ENCODE measurements at regions of chr2 and their contacts with region 1.

Region 1: DNA sequence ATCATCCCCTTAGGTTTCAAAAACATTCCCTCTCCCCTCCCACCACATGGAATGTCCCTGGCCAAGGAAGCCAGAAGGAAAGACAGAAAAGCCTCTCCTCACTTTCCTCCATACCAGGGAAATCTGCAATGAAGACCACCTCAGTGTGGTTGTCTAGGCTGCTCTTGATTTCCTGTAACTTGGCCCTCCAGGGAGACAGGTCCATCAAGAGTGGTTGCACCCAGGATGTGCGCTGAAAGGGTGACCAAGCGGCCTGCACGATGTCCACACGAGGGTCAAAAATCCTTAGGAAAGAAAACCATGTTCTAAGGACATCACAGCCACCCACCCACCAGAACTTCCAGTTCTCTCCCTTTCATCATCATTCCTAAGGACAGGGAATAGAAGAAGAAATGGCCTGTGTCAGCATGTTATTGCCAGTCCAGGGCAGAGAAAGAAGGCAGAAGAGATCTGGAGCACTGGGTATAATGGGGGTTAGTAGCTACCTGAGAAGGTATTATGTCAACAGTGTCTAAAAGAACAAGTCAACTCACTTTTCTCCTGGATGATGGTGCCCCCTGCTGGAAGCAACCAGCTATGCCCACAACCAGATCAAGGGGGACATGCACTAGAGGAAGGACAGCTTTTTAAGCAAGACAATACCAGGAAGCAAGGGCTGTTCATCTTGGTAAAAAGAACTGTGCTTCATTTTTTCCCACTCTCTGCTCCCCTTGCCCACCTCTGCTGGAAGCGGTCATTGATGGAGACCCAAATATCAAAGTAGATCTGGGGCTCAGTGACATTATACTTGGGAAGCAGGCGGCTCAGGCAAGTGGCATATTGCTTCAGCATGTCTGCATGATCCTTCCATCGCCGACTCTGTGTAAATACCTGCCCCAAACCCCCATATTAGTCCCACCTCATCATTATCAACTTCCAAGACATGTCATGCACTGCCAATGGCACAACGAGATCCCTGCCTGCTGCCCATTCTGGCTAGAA is 9.3 kb downstream of the GGCX start:
- DNase-seq: peak; percentile 86 to 93 (median 88)
- H3K4me3 ChIP-seq: no peak overlapping the region
- H3K27ac ChIP-seq: no peak overlapping the region
- H3K4me1 ChIP-seq: peaks cover 18 to 31% (median 25%) of the 10 kb centered on the region in 4 experiments
- H3K27me3 ChIP-seq: no peaks in the 10 kb centered on the region

Region 2: GRCh38 chr2:85390941-85391669 is 160.9 kb before region 1 on chr2:
- CTCF ChIA-PET with region 1: interaction called, 250 read pairs
- POLR2A ChIA-PET with region 1: interaction called, 4 read pairs
- DNase-seq: peak; percentile 61 to 75 (median 68)
- H3K4me3 ChIP-seq: no peak overlapping the region
- H3K27ac ChIP-seq: no peak overlapping the region
- H3K4me1 ChIP-seq: peaks cover 0 to 5% (median under 1%) of the 10 kb centered on the region in 4 experiments
- H3K27me3 ChIP-seq: no peaks in the 10 kb centered on the region

Region 3: DNA sequence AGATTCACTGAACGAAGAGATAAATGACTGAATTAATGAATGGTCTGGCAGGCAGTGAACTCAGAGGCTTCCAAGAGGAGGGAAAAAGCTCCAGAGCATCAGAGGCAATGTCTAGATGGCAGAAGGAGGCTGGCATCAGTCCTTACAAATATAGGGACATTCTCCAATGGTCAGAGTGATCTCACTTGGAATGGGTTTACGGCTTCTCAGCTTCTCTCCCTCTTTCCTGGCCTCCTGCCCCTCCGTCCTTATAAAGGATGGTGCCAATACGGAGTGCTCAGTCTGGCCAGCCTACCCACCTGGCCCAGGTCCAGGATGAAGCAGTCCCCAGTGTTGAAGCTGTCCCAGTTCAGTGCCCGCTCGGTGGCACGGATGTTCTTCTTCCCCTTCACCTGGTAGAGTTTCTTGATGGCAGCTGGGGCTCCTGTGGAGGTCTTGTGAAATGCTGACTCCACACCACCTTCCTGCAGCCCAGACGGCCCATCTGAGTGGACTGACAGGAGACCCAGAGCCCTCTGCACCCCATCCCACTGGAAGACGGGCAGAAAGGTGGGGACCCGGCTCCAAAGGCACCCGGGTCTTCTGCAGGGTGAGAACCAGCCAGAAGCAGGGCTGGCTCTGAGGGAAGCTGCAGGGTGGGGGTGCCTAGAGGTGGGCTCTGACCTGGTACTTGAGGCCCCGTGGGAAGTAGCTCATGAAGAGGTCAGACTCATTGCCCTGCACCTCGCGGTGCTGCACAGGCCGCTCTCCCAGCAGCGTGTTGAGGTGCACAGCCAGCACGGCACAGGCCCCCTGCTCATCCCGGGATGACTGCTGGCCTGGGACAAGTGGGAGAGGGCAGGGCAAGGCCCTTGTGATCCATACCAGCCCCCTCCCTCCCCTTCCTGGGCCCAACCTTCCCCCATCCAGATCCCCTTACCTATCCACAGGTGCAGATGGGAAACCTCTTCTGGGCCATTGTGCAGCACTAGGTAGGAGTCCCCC is 150.8 kb before region 1 on chr2:
- CTCF ChIA-PET with region 1: interaction called, 49 read pairs
- POLR2A ChIA-PET with region 1: no interaction called
- DNase-seq: no peak
- H3K4me3 ChIP-seq: no peak overlapping the region
- H3K27ac ChIP-seq: no peak overlapping the region
- H3K4me1 ChIP-seq: peaks cover 3 to 34% (median 25%) of the 10 kb centered on the region in 4 experiments
- H3K27me3 ChIP-seq: no peaks in the 10 kb centered on the region

Region 4: DNA sequence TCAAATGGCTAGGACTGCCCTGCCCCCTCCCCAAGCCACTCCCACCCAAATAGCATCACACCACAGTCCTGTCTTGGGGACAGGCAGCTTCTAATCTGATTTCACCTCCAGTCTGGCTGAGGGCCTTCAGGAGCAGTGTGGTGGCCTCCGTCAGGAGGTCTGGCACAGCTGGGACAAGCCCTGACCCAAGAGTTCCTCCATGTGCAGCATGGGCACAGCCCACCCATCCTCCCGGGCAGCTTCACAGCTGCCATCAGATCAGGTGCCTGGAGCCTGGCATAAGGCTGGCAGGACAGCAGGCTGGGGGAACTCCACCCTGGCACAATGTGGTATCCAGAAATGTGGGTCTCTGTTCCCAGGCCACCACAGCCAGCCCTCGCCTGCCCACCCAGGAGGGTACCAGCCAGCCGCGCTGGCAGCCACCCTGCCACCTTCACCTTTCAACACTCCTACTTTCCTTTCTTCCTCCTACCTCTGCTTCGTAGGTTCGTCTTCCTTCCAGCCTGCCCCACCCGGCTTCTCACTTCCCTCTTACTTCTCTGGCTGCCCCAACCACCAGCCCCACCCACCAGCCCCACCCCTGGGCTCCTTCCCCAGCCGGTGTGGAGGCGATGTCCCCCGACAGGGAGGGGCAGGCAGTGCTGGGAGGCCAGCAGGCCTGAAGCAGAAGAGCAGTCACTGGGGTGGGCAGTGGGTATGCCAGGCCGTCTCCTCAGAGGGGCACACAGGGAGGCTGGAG is 142.0 kb before region 1 on chr2 and contains the start of gene CAPG:
- CTCF ChIA-PET with region 1: interaction called, 49 read pairs
- POLR2A ChIA-PET with region 1: no interaction called
- DNase-seq: peak in 2 of 3 donors; percentile 63 to 74
- H3K4me3 ChIP-seq: peak within 1 kb of the TSS in 5 of 7 experiments; percentile 32 to 69 (median 50)
- H3K27ac ChIP-seq: no peak within 1 kb of the TSS
- H3K4me1 ChIP-seq: peaks cover 24 to 92% (median 86%) of the 10 kb centered on the region in 4 experiments
- H3K27me3 ChIP-seq: no peaks in the 10 kb centered on the region

Region 5: GRCh38 chr2:85462322-85462721 is 89.7 kb before region 1 on chr2:
- CTCF ChIA-PET with region 1: no interaction called
- POLR2A ChIA-PET with region 1: no interaction called
- DNase-seq: no peak
- H3K4me3 ChIP-seq: no peak overlapping the region
- H3K27ac ChIP-seq: no peak overlapping the region
- H3K4me1 ChIP-seq: no peaks in the 10 kb centered on the region
- H3K27me3 ChIP-seq: no peaks in the 10 kb centered on the region

Region 6: GRCh38 chr2:85524336-85524933 is 27.6 kb before region 1 on chr2:
- CTCF ChIA-PET with region 1: interaction called, 11 read pairs
- POLR2A ChIA-PET with region 1: no interaction called
- DNase-seq: peak in 2 of 3 donors; percentile 48 to 54
- H3K4me3 ChIP-seq: peak overlapping the region in 2 of 7 experiments; percentile 23 to 28
- H3K27ac ChIP-seq: peak overlapping the region in 1 of 2 experiments; percentile 47
- H3K4me1 ChIP-seq: peaks cover 10 to 22% (median 19%) of the 10 kb centered on the region in 4 experiments
- H3K27me3 ChIP-seq: no peaks in the 10 kb centered on the region

Region 7: GRCh38 chr2:85678794-85679672 is 127.0 kb after region 1 on chr2:
- CTCF ChIA-PET with region 1: no interaction called
- POLR2A ChIA-PET with region 1: no interaction called
- DNase-seq: peak; percentile 54 to 64 (median 57)
- H3K4me3 ChIP-seq: peak overlapping the region in 3 of 7 experiments; percentile 26 to 57 (median 41)
- H3K27ac ChIP-seq: no peak overlapping the region
- H3K4me1 ChIP-seq: peaks cover 0 to 18% (median 13%) of the 10 kb centered on the region in 4 experiments
- H3K27me3 ChIP-seq: peaks cover 0 to 2% (median 0%) of the 10 kb centered on the region in 5 experiments

Region 8: GRCh38 chr2:85785027-85785822 is 233.2 kb after region 1 on chr2:
- CTCF ChIA-PET with region 1: no interaction called
- POLR2A ChIA-PET with region 1: no interaction called
- DNase-seq: peak; percentile 82 to 95 (median 94)
- H3K4me3 ChIP-seq: peak overlapping the region in 3 of 7 experiments; percentile 19 to 58 (median 48)
- H3K27ac ChIP-seq: no peak overlapping the region
- H3K4me1 ChIP-seq: peaks cover 0 to 29% (median 25%) of the 10 kb centered on the region in 4 experiments
- H3K27me3 ChIP-seq: peaks cover 0 to 4% (median 0%) of the 10 kb centered on the region in 5 experiments

Region 9: DNA sequence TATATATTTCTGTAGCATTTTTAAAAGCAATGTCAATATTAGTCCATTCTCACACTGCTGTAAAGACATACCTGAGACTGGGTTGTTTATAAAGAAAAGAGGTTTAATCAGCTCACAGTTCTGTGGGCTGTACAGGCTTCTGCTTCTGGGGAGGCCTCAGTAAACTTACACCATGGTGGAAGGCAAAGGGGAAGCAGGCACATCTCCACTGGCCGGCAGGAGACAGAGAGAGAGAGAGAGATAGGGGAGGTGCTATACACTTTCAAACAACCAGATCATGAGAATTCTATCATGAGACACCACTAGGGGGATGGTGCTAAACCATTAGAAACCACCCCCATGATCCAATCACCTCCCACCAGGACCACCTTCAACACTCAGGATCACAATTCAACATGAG is 968.2 kb after region 1 on chr2:
- CTCF ChIA-PET with region 1: no interaction called
- POLR2A ChIA-PET with region 1: no interaction called
- DNase-seq: peak in 2 of 3 donors; percentile 24 to 26
- H3K4me3 ChIP-seq: peak overlapping the region in 1 of 7 experiments; percentile 41
- H3K27ac ChIP-seq: no peak overlapping the region
- H3K4me1 ChIP-seq: no peaks in the 10 kb centered on the region
- H3K27me3 ChIP-seq: no peaks in the 10 kb centered on the region

Measured in common myeloid progenitor, CD34-positive (primary cell).